Activated B cell treated with CpG ODN at 0.5 μM for 24 hours (primary cell): ENCODE measurements at regions of chr17 and their contacts with region 1.

Region 1: GRCh38 chr17:55421179-55421934 is at the start of gene MMD:
- DNase-seq: no peak
- ATAC-seq: no peak
- H3K4me3 Mint-ChIP-seq: peak within 1 kb of the TSS; percentile 93
- H3K27ac Mint-ChIP-seq: peak within 1 kb of the TSS; percentile 98
- H3K4me1 Mint-ChIP-seq: peaks cover 71% of the 10 kb centered on the region
- H3K27me3 Mint-ChIP-seq: no peaks in the 10 kb centered on the region
- CTCF ChIP-seq: no peak
- total RNA-seq, gene MMD: 45.5 and 46.3 TPM in 2 replicates

Region 2: DNA sequence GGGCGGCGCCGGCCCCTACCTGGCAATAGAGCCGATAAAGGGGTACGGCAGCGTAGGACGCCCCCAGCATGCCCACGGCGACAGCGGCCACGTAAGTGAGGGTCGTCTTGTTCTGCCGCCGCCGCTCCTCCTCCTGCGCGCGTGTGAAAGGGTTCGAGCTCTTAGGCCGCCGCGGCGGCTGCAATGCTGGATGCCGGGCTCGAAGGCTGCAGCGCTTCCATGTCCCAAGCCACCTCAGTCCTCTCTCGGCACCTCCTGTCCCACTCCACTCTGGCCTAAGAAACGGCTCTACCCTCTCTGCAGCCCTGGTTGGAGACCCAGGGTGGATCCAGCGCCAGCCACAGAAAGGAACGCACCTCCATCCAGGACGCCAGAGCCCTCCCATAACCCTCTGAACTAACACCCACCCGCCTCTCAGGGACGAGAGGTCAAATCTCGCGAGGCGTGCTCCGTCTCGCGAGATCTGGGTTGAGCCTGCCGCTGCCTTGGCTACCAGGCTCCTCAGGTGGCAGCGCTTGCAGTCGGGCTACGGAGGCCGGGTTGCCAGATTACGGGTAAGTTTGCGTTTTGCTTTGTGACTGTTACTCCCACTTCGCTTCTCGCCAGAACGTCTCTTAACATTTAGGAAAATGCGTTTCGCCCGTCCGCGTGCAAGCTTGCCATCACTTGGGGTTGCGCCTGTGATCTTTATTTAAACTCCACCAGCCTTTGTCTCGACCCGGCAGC is 452.9 kb before region 1 on chr17 and contains the starts of genes COX11 and STXBP4:
- CTCF ChIA-PET with region 1: no interaction called
- POLR2A ChIA-PET with region 1: no interaction called
- intact Hi-C with region 1: loop called (anchors 1 kb)
- DNase-seq: peak; percentile 90
- ATAC-seq: peak; percentile 97
- H3K4me3 Mint-ChIP-seq: no peak within 1 kb of the TSS
- H3K27ac Mint-ChIP-seq: no peak within 1 kb of the TSS
- H3K4me1 Mint-ChIP-seq: peaks cover 24% of the 10 kb centered on the region
- H3K27me3 Mint-ChIP-seq: no peaks in the 10 kb centered on the region
- CTCF ChIP-seq: no peak
- total RNA-seq, gene COX11: 38.5 and 46.5 TPM in 2 replicates
- total RNA-seq, gene STXBP4: 6.9 and 9.5 TPM in 2 replicates

Region 3: DNA sequence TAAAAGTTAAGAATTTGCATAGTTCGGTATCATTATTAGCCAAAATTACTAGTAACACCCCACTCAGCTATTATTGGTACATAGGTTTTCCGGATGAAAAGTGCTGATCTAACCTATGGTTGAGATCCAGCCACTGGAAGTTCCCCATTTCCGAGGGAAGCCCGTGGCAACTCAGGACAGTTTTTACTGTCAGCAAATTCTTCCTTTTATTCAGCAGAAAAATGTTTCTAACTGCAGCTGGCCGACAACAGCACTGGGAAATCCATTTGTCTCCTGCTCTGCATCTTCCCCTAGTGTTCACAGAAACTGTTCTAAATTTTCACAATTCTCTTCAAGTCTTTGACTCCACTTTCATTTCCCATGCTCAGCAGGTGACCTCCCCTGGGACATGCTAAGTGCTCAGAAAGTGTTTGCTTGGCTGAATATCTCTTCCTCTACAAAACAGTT is 15.8 kb after region 1 on chr17:
- CTCF ChIA-PET with region 1: interaction called, 9 read pairs
- POLR2A ChIA-PET with region 1: interaction called, 38 read pairs
- intact Hi-C with region 1: loop called (anchors 1 kb)
- DNase-seq: peak; percentile 36
- ATAC-seq: peak; percentile 87
- H3K4me3 Mint-ChIP-seq: peak overlapping the region; percentile 57
- H3K27ac Mint-ChIP-seq: peak overlapping the region; percentile 85
- H3K4me1 Mint-ChIP-seq: peaks cover 51% of the 10 kb centered on the region
- H3K27me3 Mint-ChIP-seq: no peaks in the 10 kb centered on the region
- CTCF ChIP-seq: no peak

Region 4: DNA sequence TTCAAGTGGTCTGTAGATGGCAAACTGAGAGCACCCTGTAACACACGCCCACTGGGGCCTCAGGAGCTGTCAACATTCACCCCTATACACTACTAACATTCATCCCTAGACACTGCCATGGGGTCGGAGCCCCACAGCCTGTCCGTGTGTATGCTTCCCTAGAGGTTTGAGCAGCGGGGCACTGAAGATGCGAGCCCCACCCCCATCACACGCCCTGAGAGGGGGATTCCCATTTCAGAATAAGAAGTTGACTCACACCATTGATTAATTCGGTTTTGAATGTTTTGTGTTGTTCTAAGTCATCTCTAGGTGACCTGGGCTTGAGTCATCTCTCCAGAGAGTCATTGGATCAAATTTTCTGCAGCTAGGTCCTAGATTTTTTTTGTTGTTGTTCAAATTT is 37.6 kb after region 1 on chr17:
- CTCF ChIA-PET with region 1: no interaction called
- POLR2A ChIA-PET with region 1: interaction called, 4 read pairs
- intact Hi-C with region 1: loop called (anchors 1 kb)
- DNase-seq: peak; percentile 37
- ATAC-seq: peak; percentile 85
- H3K4me3 Mint-ChIP-seq: peak overlapping the region; percentile 16
- H3K27ac Mint-ChIP-seq: peak overlapping the region; percentile 43
- H3K4me1 Mint-ChIP-seq: peaks cover 26% of the 10 kb centered on the region
- H3K27me3 Mint-ChIP-seq: peaks cover 9% of the 10 kb centered on the region
- CTCF ChIP-seq: no peak

Region 5: DNA sequence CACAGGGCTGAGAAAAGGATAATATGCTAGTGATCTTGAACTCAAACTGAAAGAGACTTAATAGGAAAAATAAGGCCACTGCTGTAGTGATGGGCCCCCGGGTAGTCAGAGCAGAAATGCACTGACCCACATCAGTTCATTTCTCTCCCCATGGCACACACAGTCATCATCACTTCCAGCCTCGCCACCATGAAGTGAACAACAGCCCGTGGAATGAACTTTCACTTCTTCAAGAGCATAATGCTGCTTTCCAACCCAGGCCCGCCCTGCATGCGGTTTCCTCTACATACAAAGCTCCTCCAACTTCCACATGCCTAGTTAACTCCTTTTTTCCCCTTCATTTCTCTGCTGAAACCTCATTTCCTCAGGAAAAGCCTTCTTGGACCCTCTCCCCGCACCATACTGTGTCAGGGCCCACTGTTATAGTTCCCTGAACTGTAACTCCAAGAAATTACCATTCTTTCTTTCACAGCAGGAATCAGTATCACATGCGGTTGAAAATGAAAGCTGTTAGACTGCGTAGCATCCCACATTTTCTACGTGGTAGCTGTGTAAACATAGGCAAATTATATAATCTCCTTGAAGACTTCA is 155.7 kb after region 1 on chr17:
- CTCF ChIA-PET with region 1: no interaction called
- POLR2A ChIA-PET with region 1: interaction called, 6 read pairs
- intact Hi-C with region 1: loop called (anchors 2 kb)
- DNase-seq: peak; percentile 28
- ATAC-seq: peak; percentile 78
- H3K4me3 Mint-ChIP-seq: no peak overlapping the region
- H3K27ac Mint-ChIP-seq: no peak overlapping the region
- H3K4me1 Mint-ChIP-seq: peaks cover 23% of the 10 kb centered on the region
- H3K27me3 Mint-ChIP-seq: no peaks in the 10 kb centered on the region
- CTCF ChIP-seq: no peak